Ascending aorta (tissue), 2 donors: ENCODE measurements at regions of chr4 and their contacts with region 1.

Region 1: DNA sequence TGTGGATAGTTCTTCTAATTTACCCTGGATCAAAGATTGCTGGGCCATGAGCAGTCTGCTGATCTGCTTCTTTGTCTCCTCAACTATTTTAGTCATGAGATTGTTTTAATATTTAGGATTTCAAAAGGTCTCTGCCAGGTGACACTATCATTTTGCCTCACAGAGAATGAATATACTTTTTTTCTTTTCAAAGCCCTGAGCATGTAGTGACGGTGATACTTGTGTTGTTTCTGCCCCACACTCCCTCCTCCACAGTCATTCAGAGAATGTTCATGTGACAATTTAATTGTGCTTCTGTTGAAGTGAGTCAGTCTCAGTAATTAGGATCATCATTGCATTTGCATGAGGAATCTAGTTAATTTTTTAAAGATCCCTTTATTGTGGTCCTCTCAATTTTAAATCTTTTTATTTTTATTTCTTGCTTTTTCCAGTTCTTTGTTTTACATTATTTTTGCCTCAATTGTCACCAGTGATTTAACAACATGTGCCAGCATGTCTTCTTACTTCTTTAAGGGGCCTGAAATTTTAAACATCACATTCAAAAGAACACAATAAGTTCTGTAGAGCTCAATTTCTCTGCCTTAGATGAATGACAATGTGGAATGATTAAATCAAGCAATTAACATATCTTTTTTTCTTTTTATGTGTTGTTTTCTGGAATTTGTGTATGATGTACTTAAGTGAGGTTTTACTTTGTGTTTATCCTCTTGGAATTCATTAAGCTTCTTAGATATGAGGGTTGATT is 12.3 kb downstream of the MMRN1 start:
- DNase-seq: no peak
- H3K4me3 ChIP-seq: no peak overlapping the region
- H3K27ac ChIP-seq: no peak overlapping the region
- H3K4me1 ChIP-seq: no peaks in the 10 kb centered on the region
- H3K27me3 ChIP-seq: no peaks in the 10 kb centered on the region
- CTCF ChIP-seq: no peak

Region 2: DNA sequence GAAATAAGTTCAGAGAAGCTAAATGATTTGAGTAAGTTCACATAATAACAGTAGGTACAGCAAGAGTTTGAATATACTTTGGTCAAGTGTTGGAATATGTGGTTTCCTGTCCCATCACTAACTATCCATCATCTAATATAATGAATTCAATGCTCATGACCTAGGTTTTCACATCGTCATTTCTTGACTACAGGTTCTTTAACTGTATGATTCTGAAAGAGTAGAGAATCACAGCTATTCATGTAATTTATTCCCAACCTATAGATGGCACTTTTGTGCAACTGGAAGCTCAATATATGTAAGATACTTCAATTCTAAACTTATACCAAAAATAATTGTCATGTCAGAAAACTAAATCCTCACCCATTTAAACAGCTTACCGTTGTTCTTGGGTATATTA is 742.5 kb before region 1 on chr4:
- intact Hi-C with region 1: loop called (anchors 10 kb)
- DNase-seq: no peak
- H3K4me3 ChIP-seq: no peak overlapping the region
- H3K27ac ChIP-seq: no peak overlapping the region
- H3K4me1 ChIP-seq: no peaks in the 10 kb centered on the region
- H3K27me3 ChIP-seq: no peaks in the 10 kb centered on the region
- CTCF ChIP-seq: no peak

Region 3: GRCh38 chr4:89226665-89227574 is 680.0 kb before region 1 on chr4:
- intact Hi-C with region 1: loop called (anchors 5 kb)
- DNase-seq: peak in 1 of 2 donors; percentile 83
- H3K4me3 ChIP-seq: no peak overlapping the region
- H3K27ac ChIP-seq: no peak overlapping the region
- H3K4me1 ChIP-seq: no peaks in the 10 kb centered on the region
- H3K27me3 ChIP-seq: no peaks in the 10 kb centered on the region
- CTCF ChIP-seq: peak; percentile 36 to 61 (median 52)